ENCODE measurements at regions of chr5 and their contacts with region 1.

Region 1: DNA sequence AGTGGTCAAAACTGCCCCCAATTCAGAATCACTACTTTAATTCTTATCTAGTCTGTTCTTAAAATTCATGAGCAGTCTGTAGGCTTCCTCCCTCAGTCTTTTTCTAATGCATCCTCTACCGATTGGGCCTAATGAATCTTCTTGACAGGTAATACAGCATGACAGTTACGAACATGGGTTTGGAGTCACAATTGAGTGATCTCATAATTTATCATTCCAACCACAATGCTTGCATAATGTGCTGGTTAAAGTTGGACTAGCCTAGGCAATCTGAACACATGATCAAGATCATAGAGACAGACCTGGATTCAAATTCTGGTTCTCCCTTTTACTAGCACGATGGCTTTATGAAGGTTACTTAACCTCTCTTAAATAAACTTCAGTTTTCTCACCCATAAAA is 33.1 kb upstream of the SETD9 start:
- H3K4me3 Mint-ChIP-seq: no peak overlapping the region
- H3K27ac Mint-ChIP-seq: peak overlapping the region; percentile 2
- H3K4me1 Mint-ChIP-seq: peaks cover 43% of the 10 kb centered on the region
- H3K27me3 Mint-ChIP-seq: no peaks in the 10 kb centered on the region

Region 2: DNA sequence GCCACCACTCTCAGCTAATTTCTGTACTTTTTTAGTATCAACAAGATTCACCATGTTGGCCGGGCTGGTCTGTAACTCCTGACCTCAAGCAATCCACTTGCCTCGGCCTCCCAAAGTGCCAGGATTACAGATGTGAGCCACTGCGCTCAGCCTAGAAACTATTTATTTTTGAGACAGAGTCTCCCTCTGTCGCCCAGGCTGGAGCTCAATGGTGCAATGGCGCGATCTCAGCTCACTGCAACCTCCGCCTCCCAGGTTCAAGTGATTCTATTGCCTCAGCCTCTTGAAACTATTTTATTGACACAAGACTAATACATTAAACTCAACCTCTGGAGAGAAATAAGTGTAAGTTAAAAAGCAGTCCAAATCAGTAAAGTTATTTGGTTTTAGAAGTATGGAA is 915.5 kb before region 1 on chr5:
- intact Hi-C with region 1: loop called (anchors 5 kb)
- H3K4me3 Mint-ChIP-seq: no peak overlapping the region
- H3K27ac Mint-ChIP-seq: no peak overlapping the region
- H3K4me1 Mint-ChIP-seq: no peaks in the 10 kb centered on the region
- H3K27me3 Mint-ChIP-seq: no peaks in the 10 kb centered on the region

Region 3: GRCh38 chr5:56625541-56625940 is 250.8 kb before region 1 on chr5:
- intact Hi-C with region 1: no loop called
- H3K4me3 Mint-ChIP-seq: no peak overlapping the region
- H3K27ac Mint-ChIP-seq: no peak overlapping the region
- H3K4me1 Mint-ChIP-seq: no peaks in the 10 kb centered on the region
- H3K27me3 Mint-ChIP-seq: no peaks in the 10 kb centered on the region

Region 4: DNA sequence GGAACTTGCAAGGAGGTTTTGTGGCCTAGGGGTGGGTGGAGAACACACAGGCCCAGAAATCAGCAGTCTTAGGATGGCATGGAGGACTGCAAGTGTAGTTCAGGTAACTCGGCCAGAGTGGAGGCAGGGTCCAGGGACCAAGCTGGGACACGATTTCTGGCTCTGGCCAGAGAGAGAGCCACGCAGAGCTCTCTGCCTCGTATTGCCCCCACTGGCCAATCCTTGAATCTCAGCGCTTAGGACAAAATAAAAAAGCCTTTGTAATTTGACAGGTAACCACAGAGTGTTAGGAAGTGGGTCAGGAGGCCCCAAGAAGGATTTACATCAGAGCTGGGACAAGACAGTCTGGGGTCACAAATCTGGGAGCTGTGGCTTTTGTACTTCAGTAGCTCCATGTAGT is 49.3 kb before region 1 on chr5:
- intact Hi-C with region 1: no loop called
- H3K4me3 Mint-ChIP-seq: no peak overlapping the region
- H3K27ac Mint-ChIP-seq: peak overlapping the region; percentile 61
- H3K4me1 Mint-ChIP-seq: peaks cover 90% of the 10 kb centered on the region
- H3K27me3 Mint-ChIP-seq: no peaks in the 10 kb centered on the region